Right lobe of liver (tissue), 6 donors: ENCODE measurements at regions of chr10 and their contacts with region 1.

Region 1: GRCh38 chr10:118241229-118242137 is 100.6 kb downstream of the FAM204A start:
- DNase-seq: peak; percentile 63 to 75 (median 67)
- ATAC-seq: peak; percentile 92 to 95 (median 93)
- H3K4me3 ChIP-seq: no peak overlapping the region
- H3K27ac ChIP-seq: no peak overlapping the region
- H3K4me1 ChIP-seq: no peaks in the 10 kb centered on the region
- H3K27me3 ChIP-seq: peaks cover 0 to 29% of the 10 kb centered on the region in 2 donors
- CTCF ChIP-seq: peak; percentile 86 to 96 (median 91)
- POLR2A ChIP-seq: no peak

Region 2: DNA sequence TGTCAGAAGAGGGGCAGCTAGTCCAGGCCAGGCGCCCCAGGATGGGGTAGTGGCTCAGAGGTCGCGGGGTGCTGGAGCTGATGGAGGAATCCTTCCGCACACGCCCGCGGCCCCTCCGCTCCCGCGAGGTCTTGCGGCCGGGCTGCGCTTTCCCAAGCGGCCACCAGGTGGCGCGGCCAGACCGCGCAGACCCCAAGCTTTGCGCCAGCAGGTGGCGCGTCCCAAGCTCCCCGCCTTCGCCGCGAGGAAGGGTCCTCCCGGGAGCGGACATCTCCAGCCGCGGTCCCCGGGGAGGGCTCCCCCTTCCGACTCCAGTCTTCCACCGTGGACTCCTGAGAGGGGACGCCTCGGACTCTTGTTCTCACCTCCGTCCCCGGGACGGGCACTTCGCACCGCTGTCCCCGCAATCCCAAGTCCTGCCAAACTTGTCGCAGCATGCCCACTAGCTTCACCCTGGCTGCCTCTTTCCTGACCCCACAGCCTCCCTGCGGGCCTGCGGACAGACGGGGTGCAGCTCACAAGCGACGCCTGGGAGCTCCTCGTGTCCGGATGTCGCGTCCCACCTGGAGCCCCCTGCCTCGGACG is 1024.8 kb before region 1 on chr10:
- intact Hi-C with region 1: loop called in 1 of 2 experiments (anchors 10 kb)
- DNase-seq: peak; percentile 74 to 82 (median 80)
- ATAC-seq: peak; percentile 92 to 98 (median 96)
- H3K4me3 ChIP-seq: peak overlapping the region; percentile 43 to 57 (median 47)
- H3K27ac ChIP-seq: no peak overlapping the region
- H3K4me1 ChIP-seq: peaks cover 0 to 12% (median 0%) of the 10 kb centered on the region in 4 donors
- H3K27me3 ChIP-seq: no peaks in the 10 kb centered on the region
- CTCF ChIP-seq: peak; percentile 99 to 100 (median 100)
- POLR2A ChIP-seq: no peak

Region 3: DNA sequence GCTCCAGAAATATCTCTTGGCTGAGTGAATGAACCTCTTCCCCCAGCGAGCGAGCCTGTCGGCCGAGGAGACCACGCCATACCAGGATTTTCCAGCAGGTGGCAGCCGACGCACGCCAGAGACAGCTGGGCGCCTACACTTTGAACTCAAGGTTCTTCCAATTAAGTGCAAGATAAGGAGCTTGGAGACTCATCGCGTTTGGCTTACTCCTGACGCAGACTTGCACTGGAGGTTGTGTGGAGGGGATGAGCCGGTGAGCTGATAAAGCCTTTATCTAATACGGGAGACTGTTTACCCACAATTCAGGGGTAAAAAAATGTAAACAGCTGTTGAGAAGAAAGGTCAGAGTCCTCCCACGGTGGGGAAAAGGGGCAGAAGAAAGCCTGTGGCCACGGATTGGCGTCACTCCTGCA is 744.9 kb before region 1 on chr10:
- intact Hi-C with region 1: loop called in 1 of 2 experiments (anchors 5 kb)
- DNase-seq: peak; percentile 71 to 79 (median 73)
- ATAC-seq: peak; percentile 93 to 99 (median 98)
- H3K4me3 ChIP-seq: no peak overlapping the region
- H3K27ac ChIP-seq: no peak overlapping the region
- H3K4me1 ChIP-seq: no peaks in the 10 kb centered on the region
- H3K27me3 ChIP-seq: no peaks in the 10 kb centered on the region
- CTCF ChIP-seq: peak; percentile 86 to 97 (median 92)
- POLR2A ChIP-seq: no peak

Region 4: GRCh38 chr10:118308664-118309063 is 67.2 kb after region 1 on chr10:
- intact Hi-C with region 1: no loop called
- DNase-seq: no peak
- ATAC-seq: no peak
- H3K4me3 ChIP-seq: no peak overlapping the region
- H3K27ac ChIP-seq: no peak overlapping the region
- H3K4me1 ChIP-seq: peaks cover 0 to 4% (median 0%) of the 10 kb centered on the region in 4 donors
- H3K27me3 ChIP-seq: no peaks in the 10 kb centered on the region
- CTCF ChIP-seq: no peak
- POLR2A ChIP-seq: no peak